Heart left ventricle (tissue), 16 donors: ENCODE measurements at regions of chr5 and their contacts with region 1.

Region 1: DNA sequence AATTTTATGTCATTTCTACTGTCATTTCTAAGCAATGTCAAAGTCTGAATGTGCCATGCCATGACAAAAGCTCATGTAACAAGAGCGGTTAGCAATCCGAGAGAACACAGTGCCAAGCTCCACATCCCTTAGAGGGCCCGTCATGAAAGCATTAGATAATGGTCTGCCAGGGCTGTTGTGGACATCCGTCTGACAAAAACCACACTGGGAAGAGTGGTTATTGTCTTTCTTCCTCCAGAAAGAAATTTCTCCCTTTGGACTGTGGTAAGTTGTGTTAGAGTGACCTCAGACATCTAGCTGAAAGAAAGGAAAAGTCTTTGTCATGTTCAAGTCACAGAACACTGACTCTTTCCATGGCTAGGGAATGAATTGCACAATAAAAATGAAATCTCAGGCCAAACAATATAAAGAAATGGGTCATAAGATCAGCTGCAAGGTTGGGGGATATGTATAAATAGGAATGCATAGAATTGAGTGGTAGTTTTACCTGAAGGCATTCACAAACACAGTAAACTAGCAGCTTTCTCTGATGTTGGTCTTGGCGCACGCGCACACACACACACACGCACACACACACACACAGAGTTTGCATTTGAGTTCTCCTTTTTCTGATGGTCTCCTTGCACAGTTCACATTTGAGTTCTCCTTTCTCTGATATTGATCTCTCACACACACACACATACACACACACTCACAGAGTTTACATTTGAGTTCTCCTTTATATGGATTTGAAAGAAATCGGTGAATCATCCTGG is 5.3 kb downstream of the SLC1A3 start:
- DNase-seq: peak in 4 of 5 donors; percentile 34 to 52 (median 44)
- ATAC-seq: peak; percentile 38 to 64 (median 49)
- H3K4me3 ChIP-seq: no peak overlapping the region
- H3K27ac ChIP-seq: peak overlapping the region in 11 of 12 donors; percentile 2 to 88 (median 52)
- H3K4me1 ChIP-seq: peaks cover 0 to 42% (median 12%) of the 10 kb centered on the region in 12 donors
- H3K27me3 ChIP-seq: peaks cover 0 to 5% (median 0%) of the 10 kb centered on the region in 9 donors
- CTCF ChIP-seq: no peak
- POLR2A ChIP-seq: no peak

Region 2: GRCh38 chr5:36414869-36415282 is 196.8 kb before region 1 on chr5:
- intact Hi-C with region 1: loop called in 7 of 10 experiments (anchors 5 to 10 kb)
- DNase-seq: no peak
- ATAC-seq: peak in 3 of 4 donors; percentile 41 to 65 (median 49)
- H3K4me3 ChIP-seq: no peak overlapping the region
- H3K27ac ChIP-seq: peak overlapping the region in 1 of 12 donors; percentile 25
- H3K4me1 ChIP-seq: peaks cover 0 to 18% (median 0%) of the 10 kb centered on the region in 12 donors
- H3K27me3 ChIP-seq: no peaks in the 10 kb centered on the region
- CTCF ChIP-seq: peak; percentile 25 to 66 (median 53)
- POLR2A ChIP-seq: no peak

Region 3: DNA sequence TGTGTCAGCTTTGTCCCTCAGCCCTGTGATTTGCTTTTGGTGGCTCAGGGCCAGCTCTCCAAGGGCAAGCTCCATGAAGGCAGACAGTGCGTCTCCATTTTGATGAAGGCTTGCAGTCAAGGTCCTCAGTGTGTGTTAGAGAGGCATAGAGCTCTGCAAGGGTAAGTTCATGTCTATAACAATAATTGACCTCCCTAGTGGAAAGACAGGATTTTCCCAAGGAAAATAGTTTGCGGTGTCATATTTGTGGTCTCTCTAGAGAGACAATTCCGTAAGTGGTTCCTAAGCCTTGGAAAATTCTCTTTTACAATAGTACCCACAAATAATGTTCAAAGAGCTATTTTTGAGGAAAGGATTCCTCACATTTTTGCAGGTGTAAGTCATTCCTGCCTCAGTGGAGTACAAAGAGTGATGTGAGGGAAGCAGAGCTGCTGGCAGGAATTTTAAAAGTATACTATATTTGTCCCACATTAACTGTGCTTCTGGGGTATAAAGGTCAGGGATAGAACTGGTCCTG is 34.9 kb after region 1 on chr5:
- intact Hi-C with region 1: loop called in 4 of 10 experiments (anchors 5 kb)
- DNase-seq: peak in 2 of 5 donors; percentile 35 to 40
- ATAC-seq: peak; percentile 33 to 60 (median 48)
- H3K4me3 ChIP-seq: no peak overlapping the region
- H3K27ac ChIP-seq: peak overlapping the region in 11 of 12 donors; percentile 39 to 86 (median 72)
- H3K4me1 ChIP-seq: peaks cover 0 to 38% (median 7%) of the 10 kb centered on the region in 12 donors
- H3K27me3 ChIP-seq: no peaks in the 10 kb centered on the region
- CTCF ChIP-seq: no peak
- POLR2A ChIP-seq: no peak

Region 4: DNA sequence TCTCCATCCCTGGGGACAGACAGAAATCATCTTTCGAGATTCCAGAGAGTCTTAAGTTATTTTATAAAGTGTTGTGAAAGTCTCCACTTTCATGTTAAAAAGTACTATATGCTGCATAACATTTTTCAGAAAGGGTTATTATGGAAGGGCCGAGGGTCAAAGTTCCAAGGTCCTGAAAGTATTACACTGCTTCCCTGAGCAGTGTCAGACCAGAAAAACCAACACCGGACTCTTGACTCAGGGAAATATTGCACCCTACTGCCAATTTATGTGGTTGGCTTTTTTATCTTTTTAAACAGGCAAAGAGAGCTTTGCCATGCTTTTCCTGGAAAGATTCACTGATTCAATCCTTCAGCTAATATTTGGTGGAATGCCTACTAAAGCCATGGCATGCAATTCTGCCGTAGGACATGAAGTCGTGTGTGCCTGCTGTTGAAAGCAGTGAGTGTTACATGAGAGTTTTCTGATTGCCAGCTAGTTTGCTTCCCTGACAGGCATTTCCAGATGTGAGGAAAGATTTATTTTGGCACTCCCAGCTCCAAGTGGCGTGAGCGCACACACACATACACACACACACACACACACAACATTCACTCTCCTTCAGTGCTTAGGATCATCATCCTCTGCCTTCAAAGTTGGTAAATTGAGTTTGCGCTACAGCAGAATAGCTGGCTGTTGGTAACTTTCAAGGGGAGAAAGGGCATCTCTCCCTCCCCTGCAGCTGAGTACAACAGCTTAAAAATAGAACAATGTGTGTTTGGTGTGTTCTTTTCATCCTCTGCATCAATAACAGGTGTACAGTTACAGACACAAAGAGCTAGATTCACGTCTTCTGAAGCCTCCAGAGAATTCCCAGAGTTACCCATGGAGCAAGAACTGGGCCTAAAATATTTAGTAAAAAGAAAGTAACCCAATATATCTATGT is 40.3 kb after region 1 on chr5:
- intact Hi-C with region 1: loop called in 5 of 10 experiments (anchors 5 kb)
- DNase-seq: peak in 1 of 5 donors; percentile 23
- ATAC-seq: peak; percentile 69 to 86 (median 75)
- H3K4me3 ChIP-seq: no peak overlapping the region
- H3K27ac ChIP-seq: peak overlapping the region; percentile 27 to 86 (median 74)
- H3K4me1 ChIP-seq: peaks cover 0 to 59% (median 24%) of the 10 kb centered on the region in 12 donors
- H3K27me3 ChIP-seq: no peaks in the 10 kb centered on the region
- CTCF ChIP-seq: no peak
- POLR2A ChIP-seq: no peak

Region 5: DNA sequence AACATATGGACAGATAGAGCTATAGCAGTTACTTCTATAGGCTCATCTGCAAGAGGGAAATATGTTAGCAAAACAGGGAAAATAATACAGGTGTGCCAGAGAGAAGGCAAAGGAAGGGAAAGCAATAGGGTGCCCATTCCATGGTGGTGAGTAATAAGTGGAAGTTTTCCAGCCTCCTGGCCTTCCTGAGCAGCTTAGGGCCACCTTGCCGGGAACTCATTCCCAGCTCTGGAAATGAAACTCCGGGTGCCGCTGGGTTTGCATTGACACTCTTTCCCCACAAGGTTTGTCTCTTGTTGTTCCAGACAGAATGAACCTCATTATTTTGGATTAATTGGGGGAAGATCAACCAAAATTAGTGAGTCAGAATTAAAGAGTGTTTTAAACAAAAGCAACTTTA is 53.1 kb after region 1 on chr5:
- intact Hi-C with region 1: loop called in 2 of 10 experiments (anchors 5 kb)
- DNase-seq: no peak
- ATAC-seq: peak in 1 of 4 donors; percentile 45
- H3K4me3 ChIP-seq: no peak overlapping the region
- H3K27ac ChIP-seq: peak overlapping the region in 3 of 12 donors; percentile 5 to 22 (median 11)
- H3K4me1 ChIP-seq: peaks cover 0 to 38% (median 5%) of the 10 kb centered on the region in 12 donors
- H3K27me3 ChIP-seq: no peaks in the 10 kb centered on the region
- CTCF ChIP-seq: no peak
- POLR2A ChIP-seq: no peak

Region 6: DNA sequence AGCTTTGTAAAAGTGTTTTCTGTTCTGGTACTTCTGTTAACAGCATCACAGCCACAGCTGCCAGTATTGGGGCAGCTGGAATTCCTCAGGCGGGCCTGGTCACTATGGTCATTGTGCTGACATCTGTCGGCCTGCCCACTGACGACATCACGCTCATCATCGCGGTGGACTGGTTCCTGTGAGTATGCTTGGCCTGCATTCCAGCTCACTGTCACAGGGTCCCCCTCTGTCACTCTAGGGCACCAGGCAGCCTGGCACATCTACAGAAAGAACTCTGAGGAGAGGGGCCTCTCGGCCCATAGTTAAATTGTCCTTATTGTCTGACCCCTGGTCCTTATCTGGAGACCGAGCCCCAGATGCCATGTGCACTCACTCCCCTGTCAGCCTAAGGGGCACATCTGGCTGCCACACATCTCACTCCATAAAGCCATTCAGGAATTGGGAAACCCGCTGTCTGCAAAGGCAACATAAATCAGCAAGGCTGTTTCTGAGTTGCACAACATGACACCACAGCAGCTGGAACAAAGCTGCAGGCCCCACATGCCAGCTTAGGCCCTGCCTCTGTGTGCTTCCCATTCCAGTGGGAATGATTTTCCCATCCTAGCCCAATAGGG is 72.2 kb after region 1 on chr5:
- intact Hi-C with region 1: loop called in 2 of 10 experiments (anchors 5 to 10 kb)
- DNase-seq: peak in 3 of 5 donors; percentile 41 to 86 (median 79)
- ATAC-seq: peak; percentile 28 to 77 (median 70)
- H3K4me3 ChIP-seq: no peak overlapping the region
- H3K27ac ChIP-seq: peak overlapping the region in 11 of 12 donors; percentile 15 to 61 (median 45)
- H3K4me1 ChIP-seq: peaks cover 0 to 77% (median 9%) of the 10 kb centered on the region in 12 donors
- H3K27me3 ChIP-seq: no peaks in the 10 kb centered on the region
- CTCF ChIP-seq: no peak
- POLR2A ChIP-seq: no peak